ENCODE measurements at regions of chr1 and their contacts with region 1.

Region 1: DNA sequence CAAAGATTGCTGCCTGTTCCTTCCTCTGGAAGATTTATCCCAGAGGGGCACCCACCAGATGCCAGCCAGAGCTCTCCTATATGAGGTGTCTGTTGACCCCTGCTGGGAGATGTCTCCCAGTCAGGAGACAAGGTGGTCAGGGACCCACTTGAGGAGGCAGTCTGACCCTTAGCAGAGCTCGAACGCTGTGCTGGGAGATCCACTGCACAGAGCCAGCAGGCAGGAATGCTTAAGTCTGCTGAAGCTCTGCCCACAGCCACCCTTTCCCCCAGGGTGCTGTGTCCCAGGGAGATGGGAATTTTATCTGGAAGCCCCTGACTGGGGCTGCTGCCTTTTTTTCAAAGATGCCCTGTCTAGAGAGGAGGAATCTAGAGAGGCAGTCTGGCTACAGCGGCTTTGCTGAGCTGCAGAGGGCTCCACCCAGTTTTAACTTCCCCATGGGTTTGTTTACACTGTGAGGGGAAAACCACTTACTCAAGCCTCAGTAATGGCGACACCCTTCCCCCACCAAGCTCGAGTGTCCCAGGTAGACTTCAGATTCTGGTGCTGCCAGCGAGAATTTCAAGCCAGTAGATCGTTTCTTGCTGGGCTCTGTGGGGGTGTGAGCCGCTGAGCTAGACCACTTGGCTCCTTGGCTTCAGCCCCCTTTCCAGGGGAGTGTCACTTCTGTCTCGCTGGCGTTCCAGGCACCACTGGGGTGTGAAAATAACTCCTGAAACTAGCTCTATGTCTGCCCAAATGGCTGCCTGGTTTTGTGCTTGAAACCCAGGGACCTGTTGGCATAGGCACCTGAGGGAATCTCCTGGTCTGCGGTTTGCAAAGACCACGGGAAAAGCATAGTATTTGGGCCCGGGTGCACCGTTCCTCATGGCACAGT is 51.1 kb upstream of the PDC start:
- DNase-seq: no peak
- H3K4me3 ChIP-seq: no peak overlapping the region
- H3K27ac ChIP-seq: no peak overlapping the region
- H3K4me1 ChIP-seq: no peaks in the 10 kb centered on the region
- H3K27me3 ChIP-seq: no peaks in the 10 kb centered on the region
- CTCF ChIP-seq: no peak

Region 2: GRCh38 chr1:186482661-186483255 is 29.2 kb before region 1 on chr1:
- CTCF ChIA-PET with region 1: no interaction called
- POLR2A ChIA-PET with region 1: no interaction called
- intact Hi-C with region 1: no loop called
- DNase-seq: peak; percentile 88
- H3K4me3 ChIP-seq: no peak overlapping the region
- H3K27ac ChIP-seq: peak overlapping the region; percentile 11
- H3K4me1 ChIP-seq: peaks cover 10% of the 10 kb centered on the region
- H3K27me3 ChIP-seq: no peaks in the 10 kb centered on the region
- CTCF ChIP-seq: peak; percentile 99

Region 3: DNA sequence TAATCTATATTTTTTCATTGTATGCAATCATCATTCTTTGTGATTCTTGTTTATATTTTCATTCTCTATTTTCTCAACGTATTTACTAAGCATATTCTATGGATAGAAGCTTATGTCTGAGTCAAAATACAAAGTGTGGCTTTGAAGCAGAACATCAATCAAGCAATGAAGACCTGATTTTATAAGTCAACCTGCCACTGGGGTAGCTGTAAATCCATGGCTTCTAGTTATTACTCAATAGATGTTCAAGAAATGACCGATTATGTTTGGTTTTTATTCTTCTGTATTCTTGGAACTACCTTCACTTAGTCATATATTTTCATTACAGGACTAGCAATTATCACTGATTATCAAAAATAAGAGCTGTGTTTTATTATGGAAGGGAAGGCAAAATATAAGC is 188.7 kb after region 1 on chr1:
- CTCF ChIA-PET with region 1: interaction called, 12 read pairs
- POLR2A ChIA-PET with region 1: no interaction called
- intact Hi-C with region 1: no loop called
- DNase-seq: no peak
- H3K4me3 ChIP-seq: no peak overlapping the region
- H3K27ac ChIP-seq: no peak overlapping the region
- H3K4me1 ChIP-seq: no peaks in the 10 kb centered on the region
- H3K27me3 ChIP-seq: no peaks in the 10 kb centered on the region
- CTCF ChIP-seq: no peak

Region 4: GRCh38 chr1:186875896-186876835 is 364.2 kb after region 1 on chr1:
- CTCF ChIA-PET with region 1: no interaction called
- POLR2A ChIA-PET with region 1: no interaction called
- intact Hi-C with region 1: no loop called
- DNase-seq: peak; percentile 28
- H3K4me3 ChIP-seq: no peak overlapping the region
- H3K27ac ChIP-seq: peak overlapping the region; percentile 60
- H3K4me1 ChIP-seq: peaks cover 79% of the 10 kb centered on the region
- H3K27me3 ChIP-seq: no peaks in the 10 kb centered on the region
- CTCF ChIP-seq: no peak

Measured in A673 (cell line).